ENCODE measurements at regions of chr2 and their contacts with region 1.

Region 1: GRCh38 chr2:99725820-99726219 is 236.0 kb upstream of the REV1 start:
- DNase-seq: no peak
- H3K4me3 ChIP-seq: no peak overlapping the region
- H3K27ac ChIP-seq: no peak overlapping the region
- H3K4me1 ChIP-seq: no peaks in the 10 kb centered on the region
- H3K27me3 ChIP-seq: peaks cover 2% of the 10 kb centered on the region in 2 experiments
- CTCF ChIP-seq: no peak
- POLR2A ChIP-seq: no peak

Region 2: GRCh38 chr2:99692785-99693184 is 33.0 kb before region 1 on chr2:
- CTCF ChIA-PET with region 1: no interaction called
- POLR2A ChIA-PET with region 1: no interaction called
- dilution Hi-C with region 1: no loop called
- intact Hi-C with region 1: no loop called
- DNase-seq: no peak
- H3K4me3 ChIP-seq: no peak overlapping the region
- H3K27ac ChIP-seq: no peak overlapping the region
- H3K4me1 ChIP-seq: no peaks in the 10 kb centered on the region
- H3K27me3 ChIP-seq: no peaks in the 10 kb centered on the region
- CTCF ChIP-seq: no peak
- POLR2A ChIP-seq: no peak

Region 3: GRCh38 chr2:100242891-100243619 is 517.2 kb after region 1 on chr2:
- CTCF ChIA-PET with region 1: interaction called, 3 read pairs
- POLR2A ChIA-PET with region 1: no interaction called
- dilution Hi-C with region 1: no loop called
- intact Hi-C with region 1: loop called (anchors 1 kb)
- DNase-seq: peak; percentile 47
- H3K4me3 ChIP-seq: no peak overlapping the region
- H3K27ac ChIP-seq: no peak overlapping the region
- H3K4me1 ChIP-seq: no peaks in the 10 kb centered on the region
- H3K27me3 ChIP-seq: no peaks in the 10 kb centered on the region
- CTCF ChIP-seq: peak; percentile 71 to 80
- POLR2A ChIP-seq: no peak